ENCODE measurements at regions of chr4 and their contacts with region 1.

Region 1: DNA sequence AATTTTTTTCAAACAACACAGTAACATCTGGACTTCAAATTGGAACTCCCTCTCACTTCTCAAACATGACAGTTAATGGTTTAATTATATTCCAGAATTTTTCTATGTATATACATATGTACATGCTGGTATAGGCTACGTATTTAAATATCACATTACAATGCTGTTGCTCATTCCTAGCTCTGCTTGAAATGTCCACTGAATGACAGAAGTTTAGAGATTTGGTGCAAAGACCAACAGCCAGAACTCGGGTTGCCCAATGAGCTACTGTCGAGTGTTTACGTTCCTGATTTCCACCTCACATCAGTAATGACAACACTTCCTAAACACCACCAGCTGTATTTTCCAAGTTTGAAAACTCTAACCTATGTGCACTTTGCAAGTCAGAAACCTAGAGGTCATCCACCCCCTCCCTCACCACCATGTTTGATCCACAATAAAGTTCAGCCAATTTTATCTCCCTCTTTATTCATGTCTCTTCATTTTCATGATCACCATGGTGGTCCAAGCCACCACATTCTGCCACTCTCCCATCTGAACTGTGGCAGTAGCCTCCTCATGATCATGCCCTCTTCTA is 49.3 kb upstream of the RPL34 start:
- DNase-seq: no peak
- ATAC-seq: no peak
- H3K4me3 ChIP-seq: no peak overlapping the region
- H3K4me3 Mint-ChIP-seq: no peak overlapping the region
- H3K27ac ChIP-seq: no peak overlapping the region
- H3K27ac Mint-ChIP-seq: peak overlapping the region in 5 of 9 donors; percentile 0 to 74 (median 28)
- H3K4me1 ChIP-seq: peaks cover 0 to 11% of the 10 kb centered on the region in 2 donors
- H3K4me1 Mint-ChIP-seq: peaks cover 13 to 44% (median 32%) of the 10 kb centered on the region in 7 donors
- H3K27me3 ChIP-seq: no peaks in the 10 kb centered on the region
- H3K27me3 Mint-ChIP-seq: no peaks in the 10 kb centered on the region

Region 2: DNA sequence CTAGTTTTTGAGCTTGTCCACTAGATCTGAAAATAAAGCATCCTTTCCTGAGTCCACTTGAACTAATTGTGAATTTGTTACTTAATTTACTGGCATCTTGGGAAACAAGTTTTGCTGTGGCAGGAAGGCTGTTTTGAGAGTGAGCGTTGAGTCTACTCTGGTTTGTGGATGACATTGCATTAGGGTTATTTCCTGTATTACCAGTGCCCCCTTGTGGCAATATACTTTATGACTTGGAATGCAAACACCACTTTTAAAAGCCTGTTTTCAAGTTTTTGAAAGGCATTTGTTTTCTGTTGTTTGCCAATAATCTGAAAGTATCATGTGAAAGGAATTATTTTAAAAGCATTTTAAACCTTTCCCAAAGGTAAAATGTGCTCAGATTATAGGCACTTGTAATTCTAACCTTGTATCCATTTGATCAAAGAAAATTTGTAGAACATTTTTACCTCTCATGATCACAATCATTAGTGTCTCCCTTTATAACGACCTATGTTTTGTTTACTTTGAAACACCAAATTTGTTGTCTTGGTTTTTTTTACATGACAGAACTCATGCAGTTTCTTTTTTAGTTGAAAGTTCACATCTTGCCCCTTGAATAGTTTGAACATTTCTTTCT is 657.7 kb before region 1 on chr4:
- CTCF ChIA-PET with region 1: no interaction called
- POLR2A ChIA-PET with region 1: no interaction called
- intact Hi-C with region 1: loop called in 1 of 2 experiments (anchors 1 kb)
- DNase-seq: peak in 7 of 9 donors; percentile 36 to 69 (median 63)
- ATAC-seq: peak; percentile 95
- H3K4me3 ChIP-seq: no peak overlapping the region
- H3K4me3 Mint-ChIP-seq: no peak overlapping the region
- H3K27ac ChIP-seq: no peak overlapping the region
- H3K27ac Mint-ChIP-seq: peak overlapping the region in 1 of 9 donors; percentile 38
- H3K4me1 ChIP-seq: no peaks in the 10 kb centered on the region
- H3K4me1 Mint-ChIP-seq: peaks cover 0 to 5% (median 0%) of the 10 kb centered on the region in 7 donors
- H3K27me3 ChIP-seq: no peaks in the 10 kb centered on the region
- H3K27me3 Mint-ChIP-seq: peaks cover 0 to 9% (median 1%) of the 10 kb centered on the region in 5 donors

Region 3: GRCh38 chr4:108155373-108155772 is 415.7 kb before region 1 on chr4:
- CTCF ChIA-PET with region 1: interaction called, 11 read pairs
- POLR2A ChIA-PET with region 1: interaction called, 4 read pairs
- intact Hi-C with region 1: loop called in 1 of 2 experiments (anchors 1 kb)
- DNase-seq: peak in 2 of 9 donors; percentile 38 to 65
- ATAC-seq: peak; percentile 65
- H3K4me3 ChIP-seq: peak overlapping the region; percentile 14
- H3K4me3 Mint-ChIP-seq: peak overlapping the region; percentile 83 to 100 (median 97)
- H3K27ac ChIP-seq: peak overlapping the region; percentile 87
- H3K27ac Mint-ChIP-seq: peak overlapping the region; percentile 66 to 97 (median 92)
- H3K4me1 ChIP-seq: peaks cover 35 to 72% of the 10 kb centered on the region in 2 donors
- H3K4me1 Mint-ChIP-seq: peaks cover 31 to 99% (median 80%) of the 10 kb centered on the region in 7 donors
- H3K27me3 ChIP-seq: no peaks in the 10 kb centered on the region
- H3K27me3 Mint-ChIP-seq: no peaks in the 10 kb centered on the region

Region 4: GRCh38 chr4:108473221-108473620 is 97.9 kb before region 1 on chr4:
- CTCF ChIA-PET with region 1: interaction called, 9 read pairs
- POLR2A ChIA-PET with region 1: no interaction called
- intact Hi-C with region 1: loop called in 1 of 2 experiments (anchors 1 kb)
- DNase-seq: peak in 4 of 9 donors; percentile 17 to 43 (median 22)
- ATAC-seq: peak; percentile 40
- H3K4me3 ChIP-seq: no peak overlapping the region
- H3K4me3 Mint-ChIP-seq: no peak overlapping the region
- H3K27ac ChIP-seq: no peak overlapping the region
- H3K27ac Mint-ChIP-seq: peak overlapping the region in 2 of 9 donors; percentile 25 to 31
- H3K4me1 ChIP-seq: peaks cover 0 to 7% of the 10 kb centered on the region in 2 donors
- H3K4me1 Mint-ChIP-seq: peaks cover 11 to 65% (median 58%) of the 10 kb centered on the region in 7 donors
- H3K27me3 ChIP-seq: no peaks in the 10 kb centered on the region
- H3K27me3 Mint-ChIP-seq: no peaks in the 10 kb centered on the region

Region 5: GRCh38 chr4:108527723-108528122 is 43.4 kb before region 1 on chr4:
- CTCF ChIA-PET with region 1: interaction called, 9 read pairs
- POLR2A ChIA-PET with region 1: interaction called, 3 read pairs
- intact Hi-C with region 1: loop called in 1 of 2 experiments (anchors 2 kb)
- DNase-seq: peak in 7 of 9 donors; percentile 41 to 61 (median 48)
- ATAC-seq: peak; percentile 59
- H3K4me3 ChIP-seq: peak overlapping the region; percentile 31
- H3K4me3 Mint-ChIP-seq: peak overlapping the region; percentile 16 to 81 (median 66)
- H3K27ac ChIP-seq: peak overlapping the region; percentile 54
- H3K27ac Mint-ChIP-seq: peak overlapping the region; percentile 12 to 89 (median 82)
- H3K4me1 ChIP-seq: peaks cover 20 to 61% of the 10 kb centered on the region in 2 donors
- H3K4me1 Mint-ChIP-seq: peaks cover 36 to 88% (median 82%) of the 10 kb centered on the region in 7 donors
- H3K27me3 ChIP-seq: no peaks in the 10 kb centered on the region
- H3K27me3 Mint-ChIP-seq: no peaks in the 10 kb centered on the region

Region 6: DNA sequence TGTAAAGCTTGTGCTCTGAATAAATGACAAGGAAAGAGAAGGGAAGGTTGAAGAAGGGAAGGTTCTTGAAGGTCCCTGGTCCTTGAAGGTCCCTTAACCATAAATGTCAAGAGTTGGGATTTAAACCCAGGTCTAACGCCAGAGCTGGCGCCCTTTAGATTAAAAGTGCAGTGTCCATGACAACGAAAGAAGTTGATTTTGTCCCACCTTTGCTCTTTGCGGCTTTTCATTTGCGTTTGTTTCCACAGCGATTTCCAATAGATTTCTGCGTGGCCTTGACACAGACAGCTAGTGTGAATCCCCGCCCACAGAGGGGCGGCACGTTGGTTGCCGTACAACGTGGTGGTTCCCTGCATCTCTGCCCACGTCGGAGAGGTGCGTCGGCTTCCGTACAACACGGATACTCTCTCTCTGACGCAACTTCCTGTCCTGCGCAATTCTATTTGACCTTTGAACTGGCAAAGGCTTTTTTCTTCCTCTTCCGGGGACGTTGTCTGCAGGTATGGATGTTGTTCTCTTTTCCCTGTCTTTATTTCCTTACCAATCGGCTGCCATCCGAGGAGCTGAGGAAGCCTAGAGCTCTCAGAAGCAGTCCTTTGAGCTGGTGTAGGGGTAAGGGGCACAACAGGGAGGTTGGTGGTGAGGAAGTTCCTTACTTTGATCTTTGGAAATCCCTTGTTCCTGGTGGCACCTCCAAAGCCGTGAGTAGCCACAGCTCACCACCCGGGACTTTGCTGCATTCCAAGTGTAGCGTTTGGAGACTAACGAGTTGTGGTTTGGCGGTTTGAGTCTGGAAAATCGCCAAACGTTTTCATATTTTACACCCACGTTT is 49.2 kb after region 1 on chr4 and contains the start of gene RPL34:
- CTCF ChIA-PET with region 1: interaction called, 3 read pairs
- POLR2A ChIA-PET with region 1: interaction called, 6 read pairs
- intact Hi-C with region 1: loop called in 1 of 2 experiments (anchors 1 kb)
- DNase-seq: peak; percentile 85 to 99 (median 96)
- ATAC-seq: peak; percentile 100
- H3K4me3 ChIP-seq: peak within 1 kb of the TSS; percentile 98
- H3K4me3 Mint-ChIP-seq: peak within 1 kb of the TSS; percentile 87 to 99 (median 96)
- H3K27ac ChIP-seq: peak within 1 kb of the TSS; percentile 90
- H3K27ac Mint-ChIP-seq: peak within 1 kb of the TSS; percentile 95 to 99 (median 97)
- H3K4me1 ChIP-seq: peaks cover 29 to 30% of the 10 kb centered on the region in 2 donors
- H3K4me1 Mint-ChIP-seq: peaks cover 33 to 81% (median 66%) of the 10 kb centered on the region in 7 donors
- H3K27me3 ChIP-seq: no peaks in the 10 kb centered on the region
- H3K27me3 Mint-ChIP-seq: peaks cover 0 to 3% (median 0%) of the 10 kb centered on the region in 5 donors
- total RNA-seq, gene RPL34: 1,411 to 3,442 (median 3,215) TPM

Region 7: DNA sequence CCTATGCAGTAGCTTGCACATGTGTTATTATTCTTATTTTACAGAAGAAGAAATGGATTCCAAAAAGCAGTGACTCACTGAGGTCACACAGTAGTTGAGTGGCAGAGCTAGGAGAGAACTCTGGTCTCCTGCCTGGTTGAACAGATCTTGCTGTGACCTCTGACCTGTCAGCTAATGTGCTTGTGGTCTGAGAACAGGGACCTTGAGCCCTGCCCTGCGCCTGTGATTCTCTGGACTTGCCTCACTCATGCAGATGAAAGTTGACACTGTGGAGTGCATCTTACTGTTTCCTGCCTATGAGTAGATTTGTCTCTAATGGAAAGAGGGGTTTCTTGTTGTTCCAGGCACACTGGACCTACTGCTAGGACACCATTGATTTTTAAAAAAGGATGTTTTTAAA is 159.5 kb after region 1 on chr4:
- CTCF ChIA-PET with region 1: no interaction called
- POLR2A ChIA-PET with region 1: no interaction called
- intact Hi-C with region 1: no loop called
- DNase-seq: no peak
- ATAC-seq: no peak
- H3K4me3 ChIP-seq: no peak overlapping the region
- H3K4me3 Mint-ChIP-seq: no peak overlapping the region
- H3K27ac ChIP-seq: no peak overlapping the region
- H3K27ac Mint-ChIP-seq: no peak overlapping the region
- H3K4me1 ChIP-seq: no peaks in the 10 kb centered on the region
- H3K4me1 Mint-ChIP-seq: no peaks in the 10 kb centered on the region
- H3K27me3 ChIP-seq: no peaks in the 10 kb centered on the region
- H3K27me3 Mint-ChIP-seq: peaks cover 0 to 10% (median 5%) of the 10 kb centered on the region in 5 donors

Measured in naive thymus-derived CD4-positive, alpha-beta T cell (primary cell).